Activated CD8-positive, alpha-beta T cell treated with anti-CD3 and anti-CD28 coated beads, Interleukin-2, amount 10 ng/mL, durations not matched to agents 7 days and 5 days (primary cell): ENCODE measurements at regions of chr19 and their contacts with region 1.

Region 1: GRCh38 chr19:9621156-9622037 is at the start of gene ZNF561:
- DNase-seq: peak; percentile 93
- ATAC-seq: peak; percentile 87
- H3K4me3 Mint-ChIP-seq: peak within 1 kb of the TSS; percentile 93
- H3K27ac Mint-ChIP-seq: peak within 1 kb of the TSS; percentile 99
- H3K4me1 Mint-ChIP-seq: peaks cover 21% of the 10 kb centered on the region
- H3K27me3 Mint-ChIP-seq: no peaks in the 10 kb centered on the region
- total RNA-seq, gene ZNF561: 21.1 to 23.2 TPM

Region 2: DNA sequence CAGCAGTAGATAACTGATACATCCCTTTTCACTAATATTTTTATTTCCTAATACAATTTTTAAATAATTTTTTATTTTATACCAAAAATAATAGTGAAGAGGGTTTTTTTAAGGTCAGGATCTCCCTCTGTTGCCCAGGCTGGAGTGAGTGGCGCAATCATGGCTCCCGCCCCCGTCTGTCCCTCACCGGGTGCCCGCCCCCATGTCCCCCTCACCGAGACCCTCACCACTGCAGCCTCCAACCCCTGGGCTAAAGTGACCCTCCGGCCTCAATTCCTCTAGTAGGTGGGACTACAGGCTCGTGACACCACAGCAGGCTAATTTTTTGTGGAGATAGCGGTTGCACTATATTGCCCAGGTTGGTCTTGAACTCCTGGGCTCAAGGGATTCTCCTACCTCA is 164.9 kb after region 1 on chr19:
- CTCF ChIA-PET with region 1: interaction called, 12 read pairs
- POLR2A ChIA-PET with region 1: interaction called, 5 read pairs
- DNase-seq: no peak
- ATAC-seq: no peak
- H3K4me3 Mint-ChIP-seq: peak overlapping the region; percentile 92
- H3K27ac Mint-ChIP-seq: peak overlapping the region; percentile 99
- H3K4me1 Mint-ChIP-seq: peaks cover 39% of the 10 kb centered on the region
- H3K27me3 Mint-ChIP-seq: no peaks in the 10 kb centered on the region

Region 3: GRCh38 chr19:9796113-9796773 is 174.8 kb after region 1 on chr19:
- CTCF ChIA-PET with region 1: interaction called, 15 read pairs
- POLR2A ChIA-PET with region 1: interaction called, 3 read pairs
- DNase-seq: peak; percentile 93
- ATAC-seq: peak; percentile 47
- H3K4me3 Mint-ChIP-seq: no peak overlapping the region
- H3K27ac Mint-ChIP-seq: peak overlapping the region; percentile 66
- H3K4me1 Mint-ChIP-seq: peaks cover 32% of the 10 kb centered on the region
- H3K27me3 Mint-ChIP-seq: no peaks in the 10 kb centered on the region